ENCODE measurements at regions of chr13 and their contacts with region 1.

Region 1: DNA sequence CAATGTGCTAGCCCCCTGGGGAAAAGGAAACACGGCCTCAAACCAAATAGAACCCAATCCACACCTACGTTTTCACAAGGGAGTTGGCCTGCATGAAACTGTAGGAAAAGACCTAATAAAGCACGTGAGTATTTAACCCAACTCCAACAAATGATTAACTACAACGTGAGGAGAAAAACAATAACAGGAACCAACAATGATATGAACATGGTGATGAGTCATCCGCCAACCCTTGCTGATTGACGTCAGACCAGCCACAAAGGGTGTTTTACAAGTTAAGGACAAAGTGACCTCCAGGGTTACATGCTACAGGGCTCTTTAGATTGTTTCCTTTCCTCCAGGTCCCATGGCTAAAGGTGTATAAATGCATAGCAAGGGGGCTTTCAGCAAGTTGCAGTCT is 460.5 kb downstream of the COG6 start:
- DNase-seq: no peak

Region 2: DNA sequence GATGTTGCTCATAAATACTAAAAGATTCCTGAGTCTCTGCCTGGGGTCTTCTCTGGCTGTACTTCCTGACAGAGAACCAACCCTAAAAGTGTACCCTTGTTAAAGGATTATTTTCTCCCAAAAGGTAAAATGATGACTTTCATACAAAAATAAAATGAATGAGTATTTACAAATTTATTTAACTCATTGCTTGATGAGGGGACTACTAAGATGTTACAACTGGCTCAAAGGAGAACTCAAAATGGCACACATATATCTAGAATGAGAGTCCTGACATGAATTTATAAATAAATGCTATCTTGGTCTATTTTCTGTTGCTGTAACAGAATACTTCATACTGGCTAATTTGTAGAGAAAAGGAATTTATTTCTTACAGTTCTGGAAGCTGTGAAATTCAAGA is 1155.8 kb before region 1 on chr13:
- intact Hi-C with region 1: loop called in 1 of 2 experiments (anchors 5 kb)
- DNase-seq: no peak

Region 3: GRCh38 chr13:39433651-39434050 is 682.4 kb before region 1 on chr13:
- intact Hi-C with region 1: no loop called
- DNase-seq: no peak

Region 4: GRCh38 chr13:40149611-40150274 is 33.7 kb after region 1 on chr13:
- intact Hi-C with region 1: loop called in 1 of 2 experiments (anchors 1 kb)
- DNase-seq: no peak

Region 5: GRCh38 chr13:40230833-40231266 is 114.8 kb after region 1 on chr13:
- intact Hi-C with region 1: no loop called
- DNase-seq: no peak